Lower leg skin (tissue), 4 donors: ENCODE measurements at regions of chr19 and their contacts with region 1.

Region 1: DNA sequence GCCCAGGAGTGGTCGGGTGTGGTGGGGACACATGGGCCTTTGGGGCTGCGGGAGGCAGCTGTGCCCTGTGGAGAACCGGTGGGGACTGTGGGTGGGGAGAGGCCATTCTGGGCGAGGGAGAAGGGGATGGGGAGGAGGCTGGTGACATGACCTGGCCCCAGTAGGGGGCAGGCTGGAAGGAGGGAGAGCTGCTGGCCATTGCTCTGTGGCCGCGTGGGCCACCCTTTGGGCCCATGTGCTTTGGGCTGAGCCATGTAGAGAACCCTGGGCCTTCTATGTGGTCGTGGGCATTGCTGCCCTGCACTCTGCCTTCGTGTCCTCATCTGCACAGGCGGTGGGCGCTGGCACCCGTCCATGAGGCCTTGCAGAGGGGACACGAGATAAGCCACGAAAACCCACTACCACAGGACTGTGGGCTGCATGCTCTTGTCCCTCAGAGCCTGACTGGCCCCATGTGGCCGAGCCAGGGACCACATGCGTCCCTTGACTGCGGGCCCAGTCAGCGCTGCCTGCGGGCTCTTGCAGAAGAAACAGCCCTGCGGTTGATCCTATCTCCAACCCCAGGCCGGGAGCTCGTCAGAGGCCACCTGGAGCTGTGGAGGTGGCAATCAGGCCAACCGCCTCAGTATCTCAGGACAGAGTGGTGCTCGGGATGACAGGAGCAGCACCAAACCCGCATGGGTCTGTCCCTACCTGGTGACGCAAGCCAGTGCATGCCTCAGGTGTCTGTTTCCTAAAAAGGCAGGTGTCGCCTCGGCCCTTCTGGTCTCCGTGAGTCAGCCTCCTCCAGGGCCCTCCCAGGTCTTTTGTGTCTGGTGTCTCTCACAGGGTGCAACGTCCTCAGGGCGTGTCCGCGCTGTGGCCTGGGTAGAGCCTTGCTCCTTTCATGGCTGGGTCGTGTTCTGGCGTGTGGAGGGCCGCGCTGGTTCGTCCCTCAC is 14.3 kb downstream of the FZR1 start:
- DNase-seq: peak in 1 of 2 donors; percentile 47
- H3K4me3 ChIP-seq: no peak overlapping the region
- CTCF ChIP-seq: no peak
- POLR2A ChIP-seq: no peak

Region 2: GRCh38 chr19:3572132-3572854 is 51.9 kb after region 1 on chr19:
- intact Hi-C with region 1: no loop called
- DNase-seq: peak; percentile 100
- H3K4me3 ChIP-seq: no peak overlapping the region
- CTCF ChIP-seq: no peak
- POLR2A ChIP-seq: no peak

Region 3: GRCh38 chr19:3618144-3618810 is 97.8 kb after region 1 on chr19:
- intact Hi-C with region 1: loop called (anchors 10 kb)
- DNase-seq: no peak
- H3K4me3 ChIP-seq: no peak overlapping the region
- CTCF ChIP-seq: peak in 1 of 3 donors; percentile 84
- POLR2A ChIP-seq: no peak

Region 4: GRCh38 chr19:5281588-5281987 is 1761.2 kb after region 1 on chr19:
- intact Hi-C with region 1: no loop called
- DNase-seq: peak; percentile 66 to 91
- H3K4me3 ChIP-seq: no peak overlapping the region
- CTCF ChIP-seq: no peak
- POLR2A ChIP-seq: no peak